Sigmoid colon (tissue), 7 donors: ENCODE measurements at regions of chr2 and their contacts with region 1.

Region 1: DNA sequence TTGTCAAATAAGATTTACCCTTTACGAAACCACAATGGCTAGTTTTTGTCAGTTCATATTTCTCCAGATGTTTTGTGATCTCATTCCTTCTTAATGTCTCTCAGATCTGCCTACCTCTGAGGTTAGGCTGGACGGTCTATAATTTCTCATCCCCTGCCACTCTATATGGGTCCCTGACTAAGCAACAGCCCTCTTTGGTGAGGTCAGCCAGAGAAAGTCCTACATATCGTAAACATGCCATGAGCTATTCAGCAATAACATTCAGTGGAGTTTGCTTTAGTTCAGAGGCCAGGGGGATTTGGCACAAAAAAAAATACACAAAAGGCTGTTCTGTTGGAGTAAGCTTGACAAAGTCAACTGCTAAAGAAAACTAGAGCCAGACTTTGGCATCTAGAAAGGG is 192.1 kb upstream of the NCKAP5 start:
- DNase-seq: no peak
- H3K4me3 ChIP-seq: no peak overlapping the region
- H3K27ac ChIP-seq: no peak overlapping the region
- H3K4me1 ChIP-seq: peaks cover 0 to 13% (median 10%) of the 10 kb centered on the region in 4 donors
- H3K27me3 ChIP-seq: no peaks in the 10 kb centered on the region
- CTCF ChIP-seq: no peak
- EP300 ChIP-seq: no peak
- POLR2A ChIP-seq: no peak

Region 2: DNA sequence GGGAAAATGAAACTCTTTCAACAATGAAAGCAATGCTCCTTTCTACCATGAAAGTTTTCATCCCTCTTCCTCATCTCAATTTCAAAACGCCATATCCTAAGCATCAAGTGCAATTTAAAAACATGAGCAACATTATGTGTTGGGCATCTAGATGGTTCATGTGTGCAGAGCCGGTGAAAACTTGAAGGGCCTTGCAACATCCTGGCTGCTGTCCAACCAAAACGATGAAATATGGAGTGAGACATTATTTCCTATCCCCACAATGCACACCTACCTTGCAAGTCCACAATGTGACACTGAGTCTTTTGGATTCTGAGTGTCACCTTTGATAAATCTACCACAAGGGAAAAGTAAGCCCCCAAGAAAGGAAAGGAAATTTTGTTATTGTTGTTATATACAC is 302.1 kb before region 1 on chr2:
- intact Hi-C with region 1: no loop called
- DNase-seq: no peak
- H3K4me3 ChIP-seq: no peak overlapping the region
- H3K27ac ChIP-seq: no peak overlapping the region
- H3K4me1 ChIP-seq: no peaks in the 10 kb centered on the region
- H3K27me3 ChIP-seq: no peaks in the 10 kb centered on the region
- CTCF ChIP-seq: no peak
- EP300 ChIP-seq: no peak
- POLR2A ChIP-seq: no peak

Region 3: GRCh38 chr2:133748007-133748700 is 12.2 kb before region 1 on chr2:
- intact Hi-C with region 1: loop called (anchors 1 kb)
- DNase-seq: no peak
- H3K4me3 ChIP-seq: no peak overlapping the region
- H3K27ac ChIP-seq: no peak overlapping the region
- H3K4me1 ChIP-seq: no peaks in the 10 kb centered on the region
- H3K27me3 ChIP-seq: no peaks in the 10 kb centered on the region
- CTCF ChIP-seq: no peak
- EP300 ChIP-seq: no peak
- POLR2A ChIP-seq: no peak

Region 4: GRCh38 chr2:133829450-133830065 is 69.2 kb after region 1 on chr2:
- intact Hi-C with region 1: no loop called
- DNase-seq: no peak
- H3K4me3 ChIP-seq: no peak overlapping the region
- H3K27ac ChIP-seq: no peak overlapping the region
- H3K4me1 ChIP-seq: no peaks in the 10 kb centered on the region
- H3K27me3 ChIP-seq: no peaks in the 10 kb centered on the region
- CTCF ChIP-seq: no peak
- EP300 ChIP-seq: no peak
- POLR2A ChIP-seq: no peak